Caco-2 (cell line): ENCODE measurements at regions of chr1 and their contacts with region 1.

Region 1: DNA sequence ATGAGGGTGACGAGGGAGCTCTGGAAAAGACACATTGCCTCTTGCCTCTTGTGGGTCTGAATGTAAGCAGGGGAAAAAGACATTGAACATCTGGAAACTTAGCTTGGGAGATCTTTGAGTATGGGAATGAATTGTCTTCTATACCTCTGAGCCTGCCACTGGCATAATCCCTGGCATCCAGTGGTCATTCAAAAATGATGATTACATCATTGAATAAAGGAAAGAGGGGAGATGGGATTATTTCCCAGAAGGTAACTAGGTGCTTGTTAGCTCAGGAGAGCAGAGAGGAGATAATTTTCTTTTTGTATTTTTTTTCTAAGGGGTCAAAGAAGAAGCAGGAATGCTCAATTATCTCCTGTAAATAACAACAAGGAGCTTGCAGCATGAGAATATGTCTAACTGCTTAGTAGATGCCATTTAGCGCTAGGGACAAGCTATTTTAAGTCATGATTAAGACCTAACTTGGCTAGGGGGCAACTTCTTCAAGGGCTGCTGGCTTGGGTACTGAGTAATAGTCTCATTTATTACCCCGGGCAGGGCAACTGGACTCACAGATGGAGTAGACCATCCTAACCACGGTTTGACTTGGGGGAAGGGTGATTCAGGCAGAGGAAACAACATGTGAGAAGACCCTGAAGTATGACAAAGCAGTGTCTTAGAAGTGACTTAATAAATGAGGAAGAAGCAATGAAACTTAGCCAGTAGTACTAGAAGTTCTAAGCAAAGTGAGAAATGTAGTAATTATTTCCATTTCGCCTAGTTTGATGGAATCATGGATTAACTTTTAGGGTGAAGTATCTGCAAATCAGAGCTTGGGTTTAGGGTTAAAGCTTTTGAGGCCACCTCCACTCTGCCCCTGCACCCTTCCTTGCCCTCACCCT is 11.0 kb upstream of the XCL2 start:
- DNase-seq: no peak
- H3K4me3 ChIP-seq: no peak overlapping the region
- H3K4me3 Mint-ChIP-seq: no peak overlapping the region
- H3K27ac Mint-ChIP-seq: peak overlapping the region; percentile 18
- H3K4me1 ChIP-seq: peaks cover 63% of the 10 kb centered on the region
- H3K4me1 Mint-ChIP-seq: peaks cover 31% of the 10 kb centered on the region
- H3K27me3 ChIP-seq: no peaks in the 10 kb centered on the region
- H3K27me3 Mint-ChIP-seq: no peaks in the 10 kb centered on the region
- CTCF ChIP-seq: no peak

Region 2: DNA sequence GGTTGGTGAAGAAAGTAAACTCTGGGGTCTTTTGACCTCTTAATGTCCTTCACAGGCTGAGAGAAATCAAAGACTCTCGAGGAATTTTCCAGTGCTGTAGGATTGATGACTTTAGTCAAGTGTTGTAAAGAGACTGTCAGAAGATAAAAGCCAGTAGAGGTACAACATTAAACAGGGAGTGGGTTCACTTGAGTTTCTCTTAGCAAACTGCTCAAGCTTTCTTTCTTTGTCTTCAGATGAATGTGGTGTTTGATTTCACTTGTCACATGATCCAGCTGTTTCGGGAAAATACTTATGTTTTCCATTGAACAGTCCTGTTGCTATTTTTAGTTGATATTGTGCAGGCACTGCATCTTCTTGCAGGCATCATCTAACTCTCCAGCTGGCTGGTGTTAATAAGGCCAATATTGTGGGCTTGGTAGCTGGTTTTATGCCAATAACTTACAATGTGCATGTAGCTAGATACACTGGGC is 56.6 kb before region 1 on chr1:
- CTCF ChIA-PET with region 1: no interaction called
- POLR2A ChIA-PET with region 1: no interaction called
- intact Hi-C with region 1: loop called (anchors 5 kb)
- DNase-seq: no peak
- H3K4me3 ChIP-seq: no peak overlapping the region
- H3K4me3 Mint-ChIP-seq: no peak overlapping the region
- H3K27ac Mint-ChIP-seq: no peak overlapping the region
- H3K4me1 ChIP-seq: peaks cover 55% of the 10 kb centered on the region
- H3K4me1 Mint-ChIP-seq: peaks cover 32% of the 10 kb centered on the region
- H3K27me3 ChIP-seq: no peaks in the 10 kb centered on the region
- H3K27me3 Mint-ChIP-seq: no peaks in the 10 kb centered on the region
- CTCF ChIP-seq: no peak